Heart left ventricle (tissue), 16 donors: ENCODE measurements at regions of chr15 and their contacts with region 1.

Region 1: DNA sequence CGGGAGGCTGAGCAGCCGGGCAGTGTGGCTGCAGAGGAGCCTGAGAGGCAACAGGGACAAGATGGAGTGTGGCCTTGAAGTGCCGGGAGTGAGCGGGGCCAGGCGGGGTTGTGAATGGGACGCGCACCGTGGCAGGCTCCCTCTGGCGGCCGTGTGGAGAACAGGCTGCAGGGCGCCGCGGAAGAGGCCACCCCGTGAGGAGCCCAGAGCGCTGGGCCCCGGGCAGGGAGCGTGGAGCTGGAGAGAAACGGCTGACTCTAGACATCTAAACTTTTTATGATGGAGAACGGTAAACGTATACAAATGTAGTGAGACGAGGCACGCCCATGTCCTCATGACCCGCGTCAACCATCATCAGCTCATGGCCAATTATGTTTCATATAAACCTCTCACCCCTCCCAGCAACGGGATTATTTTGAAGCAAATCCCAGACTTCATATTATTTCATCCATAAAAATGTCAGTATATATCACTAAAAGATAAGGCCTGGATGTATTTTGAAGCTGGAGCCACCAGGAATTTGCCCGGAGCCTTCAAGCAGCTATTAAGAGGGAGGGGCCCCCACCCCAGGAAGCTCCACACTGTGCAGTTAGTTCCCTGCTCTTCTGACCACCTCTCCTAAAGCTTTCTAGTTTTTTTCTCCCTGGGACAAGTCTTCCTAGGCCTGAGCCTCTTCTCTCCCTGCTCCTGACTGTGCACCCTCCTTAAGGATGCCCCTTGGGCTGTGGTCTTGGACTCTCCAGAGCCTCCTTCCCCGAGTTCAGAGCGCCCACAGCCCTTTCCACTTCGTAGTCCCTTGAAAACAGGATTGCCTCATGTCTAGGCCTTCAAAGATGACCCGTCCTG is 149.4 kb downstream of the SMAD6 start:
- DNase-seq: peak; percentile 86 to 93 (median 90)
- ATAC-seq: peak; percentile 78 to 93 (median 91)
- H3K4me3 ChIP-seq: peak overlapping the region in 5 of 12 donors; percentile 3 to 33 (median 19)
- H3K27ac ChIP-seq: peak overlapping the region in 11 of 12 donors; percentile 68 to 87 (median 82)
- H3K4me1 ChIP-seq: peaks cover 0 to 36% (median 27%) of the 10 kb centered on the region in 12 donors
- H3K27me3 ChIP-seq: no peaks in the 10 kb centered on the region
- CTCF ChIP-seq: peak; percentile 95 to 99 (median 98)
- POLR2A ChIP-seq: no peak

Region 2: DNA sequence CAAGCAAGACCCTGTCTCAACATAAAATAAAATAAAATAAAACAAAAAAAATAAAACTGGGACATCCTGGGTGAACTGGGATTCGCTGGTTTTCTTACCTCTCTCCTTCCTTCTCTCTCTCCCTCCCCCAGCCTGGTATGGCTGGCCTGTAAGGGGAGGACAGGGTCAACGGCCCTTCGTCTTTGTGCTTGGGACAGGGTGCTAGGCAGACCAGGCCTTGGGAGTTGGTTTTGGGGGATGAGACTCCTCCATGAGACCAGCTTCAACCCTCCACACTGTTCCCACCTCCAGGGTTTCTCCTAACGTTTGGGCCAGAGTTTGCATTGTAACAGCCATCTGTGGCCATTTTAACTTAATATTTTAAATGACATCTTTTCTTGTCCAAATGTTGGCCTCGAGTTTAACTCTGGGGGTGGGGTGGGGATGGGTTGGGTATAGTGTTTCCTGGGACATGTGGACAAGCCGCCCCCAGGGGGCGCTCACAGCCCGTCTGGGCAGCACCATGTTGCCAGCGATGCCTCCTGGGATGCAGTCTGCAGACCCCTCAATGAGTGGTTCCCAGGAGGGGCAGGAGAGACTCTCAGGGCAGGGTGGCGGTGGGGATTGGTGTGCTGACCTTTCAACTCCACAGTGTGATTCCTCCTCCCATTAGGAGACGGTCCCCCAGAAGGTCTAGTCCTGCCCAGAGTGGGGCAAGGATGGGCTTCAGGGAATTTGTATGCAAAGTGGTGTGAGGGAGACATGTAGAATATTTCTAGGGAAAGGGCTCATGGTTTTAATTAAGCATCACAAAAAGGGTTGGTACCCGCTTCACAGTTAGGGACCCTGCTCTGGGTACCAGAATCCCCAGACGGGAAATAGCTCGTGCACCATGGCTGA is 247.9 kb before region 1 on chr15:
- intact Hi-C with region 1: loop called (anchors 1 to 5 kb)
- DNase-seq: peak; percentile 58 to 83 (median 65)
- ATAC-seq: peak; percentile 52 to 90 (median 79)
- H3K4me3 ChIP-seq: no peak overlapping the region
- H3K27ac ChIP-seq: no peak overlapping the region
- H3K4me1 ChIP-seq: peaks cover 0 to 6% (median 0%) of the 10 kb centered on the region in 12 donors
- H3K27me3 ChIP-seq: no peaks in the 10 kb centered on the region
- CTCF ChIP-seq: peak; percentile 66 to 87 (median 82)
- POLR2A ChIP-seq: no peak

Region 3: DNA sequence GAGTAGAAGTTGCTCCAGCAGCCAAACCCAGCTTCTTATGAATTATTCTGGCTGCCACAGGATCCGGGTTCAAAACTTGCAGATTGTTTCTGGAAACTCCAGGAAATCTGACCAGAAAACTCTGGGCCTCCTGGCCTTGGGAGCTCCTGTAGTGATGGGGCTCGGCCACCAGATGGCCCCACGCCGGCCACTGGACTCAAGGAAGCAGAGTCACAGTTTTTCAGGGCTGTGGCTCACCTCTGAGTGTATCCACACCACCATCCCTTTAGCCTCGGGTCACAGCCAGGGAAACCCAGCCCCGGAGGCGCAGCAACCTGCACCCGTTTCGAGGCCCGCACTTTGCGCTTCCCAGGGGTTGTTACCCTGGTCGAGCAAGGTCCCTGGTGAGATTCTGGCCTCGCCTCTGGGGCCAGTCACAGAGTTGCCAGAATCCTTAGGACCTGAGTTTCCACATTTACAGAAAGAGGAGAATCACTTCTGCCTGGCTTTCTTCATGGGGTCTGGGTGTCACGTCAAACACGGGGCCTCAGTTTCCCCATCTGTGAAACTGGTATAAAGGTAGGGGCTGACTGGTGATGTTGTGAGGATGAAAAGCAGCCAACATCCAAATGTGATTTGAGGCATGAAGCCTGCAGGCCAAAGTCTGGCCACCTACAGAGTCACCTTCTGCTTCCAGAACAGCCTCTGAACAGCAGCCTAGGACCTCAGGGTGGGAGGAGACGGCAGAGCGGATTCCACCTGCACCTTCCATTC is 232.1 kb before region 1 on chr15:
- intact Hi-C with region 1: loop called in 5 of 10 experiments (anchors 5 kb)
- DNase-seq: peak; percentile 73 to 85 (median 77)
- ATAC-seq: peak; percentile 53 to 75 (median 72)
- H3K4me3 ChIP-seq: no peak overlapping the region
- H3K27ac ChIP-seq: peak overlapping the region in 11 of 12 donors; percentile 1 to 87 (median 70)
- H3K4me1 ChIP-seq: peaks cover 0 to 66% (median 38%) of the 10 kb centered on the region in 12 donors
- H3K27me3 ChIP-seq: peaks cover 0 to 10% (median 0%) of the 10 kb centered on the region in 9 donors
- CTCF ChIP-seq: peak; percentile 81 to 96 (median 92)
- POLR2A ChIP-seq: no peak

Region 4: DNA sequence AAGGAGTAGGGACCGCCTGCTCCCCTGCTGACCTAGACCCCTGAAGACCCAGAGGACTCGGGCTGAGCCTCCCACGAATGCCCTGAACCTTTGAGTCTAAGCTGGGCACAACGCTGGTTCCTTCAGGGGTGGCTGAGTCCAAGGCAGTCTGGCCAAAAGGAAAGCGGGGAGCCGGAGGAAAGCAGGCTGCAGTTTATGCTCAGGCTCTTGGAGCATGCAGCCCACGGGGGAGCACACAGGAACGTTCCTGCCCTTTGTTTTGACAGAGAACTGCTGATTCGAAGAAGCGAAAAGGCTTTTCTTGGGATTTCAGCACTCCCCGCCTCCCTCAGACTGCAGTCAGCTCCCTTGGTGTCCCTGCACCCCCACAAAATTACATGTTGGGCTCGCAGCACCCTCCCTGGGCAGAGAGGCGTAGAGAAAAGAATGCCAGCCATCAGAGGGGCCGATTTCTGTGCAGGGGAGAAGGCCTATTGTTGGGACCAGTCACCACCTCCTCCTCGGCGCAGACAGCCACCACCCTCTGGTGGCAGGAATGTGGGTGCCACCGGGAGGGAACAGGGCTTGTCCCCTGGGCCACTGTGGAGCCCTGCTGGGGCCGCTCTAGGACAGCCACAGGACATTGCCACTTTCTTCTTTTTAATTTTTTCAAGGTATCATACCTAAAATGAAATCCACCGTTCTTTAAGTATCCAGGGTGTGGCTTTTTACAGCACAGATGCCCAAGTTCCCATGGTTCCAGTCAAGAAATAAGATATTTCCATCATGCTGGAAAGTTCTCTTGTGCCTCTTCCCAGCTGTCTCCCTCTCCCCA is 77.2 kb before region 1 on chr15:
- intact Hi-C with region 1: loop called (anchors 1 to 2 kb)
- DNase-seq: peak; percentile 85 to 91 (median 87)
- ATAC-seq: peak; percentile 89 to 95 (median 93)
- H3K4me3 ChIP-seq: no peak overlapping the region
- H3K27ac ChIP-seq: peak overlapping the region; percentile 16 to 79 (median 65)
- H3K4me1 ChIP-seq: peaks cover 0 to 83% (median 39%) of the 10 kb centered on the region in 12 donors
- H3K27me3 ChIP-seq: no peaks in the 10 kb centered on the region
- CTCF ChIP-seq: peak; percentile 89 to 99 (median 96)
- POLR2A ChIP-seq: no peak

Region 5: GRCh38 chr15:66883322-66883911 is 32.0 kb after region 1 on chr15:
- intact Hi-C with region 1: no loop called
- DNase-seq: peak; percentile 90 to 96 (median 91)
- ATAC-seq: peak; percentile 80 to 86 (median 84)
- H3K4me3 ChIP-seq: no peak overlapping the region
- H3K27ac ChIP-seq: peak overlapping the region; percentile 33 to 88 (median 77)
- H3K4me1 ChIP-seq: peaks cover 2 to 66% (median 46%) of the 10 kb centered on the region in 12 donors
- H3K27me3 ChIP-seq: no peaks in the 10 kb centered on the region
- CTCF ChIP-seq: no peak
- POLR2A ChIP-seq: no peak